ENCODE measurements at regions of chr6 and their contacts with region 1.

Region 1: GRCh38 chr6:125749173-125749864 is at the start of gene HEY2:
- DNase-seq: peak; percentile 92 to 94
- ATAC-seq: peak; percentile 55 to 65
- H3K4me3 ChIP-seq: peak within 1 kb of the TSS; percentile 73 to 86 (median 85)
- H3K27ac ChIP-seq: peak within 1 kb of the TSS; percentile 89 to 99 (median 94)
- H3K4me1 ChIP-seq: peaks cover 11 to 30% of the 10 kb centered on the region in 2 donors
- H3K27me3 ChIP-seq: no peaks in the 10 kb centered on the region
- CTCF ChIP-seq: peak in 3 of 5 experiments; percentile 43 to 51 (median 48)
- POLR2A ChIP-seq: peak; percentile 92 to 97
- total RNA-seq, gene HEY2: 5.9 to 9.0 (median 7.4) TPM

Region 2: GRCh38 chr6:124303971-124304370 is 1445.3 kb before region 1 on chr6:
- in situ Hi-C with region 1: no loop called
- intact Hi-C with region 1: no loop called
- DNase-seq: no peak
- ATAC-seq: no peak
- H3K4me3 ChIP-seq: no peak overlapping the region
- H3K27ac ChIP-seq: no peak overlapping the region
- H3K4me1 ChIP-seq: no peaks in the 10 kb centered on the region
- H3K27me3 ChIP-seq: no peaks in the 10 kb centered on the region
- CTCF ChIP-seq: no peak
- POLR2A ChIP-seq: no peak

Region 3: DNA sequence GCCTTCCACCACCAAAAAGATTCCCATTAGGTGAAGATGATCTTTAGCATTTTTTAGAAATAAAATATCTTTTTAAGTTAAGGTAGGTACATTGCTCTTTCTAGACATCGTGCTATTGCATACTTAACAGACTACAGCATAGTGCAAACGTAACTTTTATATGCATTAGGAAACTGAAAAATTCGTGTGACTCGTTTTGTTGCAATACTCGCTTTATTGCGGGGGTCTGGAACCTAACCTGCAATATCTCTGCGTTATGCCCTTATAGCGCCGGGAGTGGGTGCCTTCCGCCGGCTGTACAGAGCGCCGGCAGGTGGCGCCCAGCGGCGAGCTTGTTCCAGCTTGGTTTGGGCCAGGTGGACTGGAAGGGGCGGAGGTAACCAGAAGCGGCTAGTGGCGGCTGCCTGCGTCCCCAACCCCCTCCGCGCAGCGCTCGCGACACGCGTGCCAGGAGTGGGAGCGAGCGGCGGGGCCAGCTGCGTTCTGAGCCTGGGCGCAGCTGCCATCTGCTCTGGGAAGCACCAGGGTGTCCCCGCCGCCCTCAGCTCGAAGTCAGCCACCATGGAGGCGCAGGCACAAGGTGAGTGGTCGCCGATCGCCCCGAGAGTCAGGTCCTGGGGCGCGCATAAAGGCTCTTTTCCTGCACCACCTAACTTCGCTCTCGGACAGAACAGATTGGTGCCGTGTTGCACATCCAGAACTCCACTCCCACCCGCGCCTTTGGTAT is 595.8 kb before region 1 on chr6 and contains the start of gene TPD52L1:
- in situ Hi-C with region 1: loop called in 3 of 4 experiments (anchors 25 kb)
- intact Hi-C with region 1: loop called (anchors 2 kb)
- DNase-seq: peak; percentile 88 to 93
- ATAC-seq: peak; percentile 71 to 73
- H3K4me3 ChIP-seq: peak within 1 kb of the TSS; percentile 65 to 93 (median 86)
- H3K27ac ChIP-seq: peak within 1 kb of the TSS; percentile 89 to 94 (median 94)
- H3K4me1 ChIP-seq: peaks cover 37 to 45% of the 10 kb centered on the region in 2 donors
- H3K27me3 ChIP-seq: no peaks in the 10 kb centered on the region
- CTCF ChIP-seq: peak; percentile 89 to 95 (median 92)
- POLR2A ChIP-seq: peak; percentile 71 to 77
- total RNA-seq, gene TPD52L1: 47.6 to 152 (median 123) TPM

Region 4: GRCh38 chr6:125307964-125308615 is 441.2 kb before region 1 on chr6:
- in situ Hi-C with region 1: no loop called
- intact Hi-C with region 1: loop called (anchors 2 kb)
- DNase-seq: peak; percentile 58 to 78
- ATAC-seq: peak; percentile 87 to 92
- H3K4me3 ChIP-seq: no peak overlapping the region
- H3K27ac ChIP-seq: peak overlapping the region; percentile 69 to 87 (median 75)
- H3K4me1 ChIP-seq: peaks cover 6 to 12% of the 10 kb centered on the region in 2 donors
- H3K27me3 ChIP-seq: no peaks in the 10 kb centered on the region
- CTCF ChIP-seq: no peak
- POLR2A ChIP-seq: no peak

Region 5: GRCh38 chr6:125516644-125517043 is 232.7 kb before region 1 on chr6:
- in situ Hi-C with region 1: no loop called
- intact Hi-C with region 1: no loop called
- DNase-seq: no peak
- ATAC-seq: no peak
- H3K4me3 ChIP-seq: no peak overlapping the region
- H3K27ac ChIP-seq: no peak overlapping the region
- H3K4me1 ChIP-seq: no peaks in the 10 kb centered on the region
- H3K27me3 ChIP-seq: no peaks in the 10 kb centered on the region
- CTCF ChIP-seq: no peak
- POLR2A ChIP-seq: no peak

Region 6: DNA sequence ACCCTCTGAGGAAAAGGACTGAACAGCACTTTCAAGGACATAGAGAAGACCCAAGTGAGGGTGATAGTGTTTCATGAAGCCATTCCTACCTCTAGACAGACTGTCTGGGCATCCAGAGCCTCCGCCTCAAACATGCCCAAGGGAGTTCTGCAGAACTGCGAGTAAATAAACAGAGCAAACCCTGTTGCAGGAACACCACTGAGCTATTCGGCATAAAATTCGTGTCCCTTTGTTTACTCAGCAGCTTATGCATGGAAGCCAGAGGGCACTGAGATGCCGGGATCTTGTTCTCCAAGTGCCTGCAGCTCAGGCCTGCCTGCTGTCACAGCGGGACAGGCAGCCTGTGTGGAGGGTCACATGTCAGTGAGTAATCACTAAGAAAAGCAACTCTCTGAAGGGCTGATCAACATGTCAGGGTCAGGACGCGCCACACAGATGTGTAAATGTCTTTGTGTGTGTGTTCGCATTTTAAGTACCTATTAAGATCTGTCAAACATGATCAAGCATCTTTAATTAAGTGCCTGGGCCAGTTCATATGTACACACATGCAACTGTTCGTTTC is 164.8 kb before region 1 on chr6:
- in situ Hi-C with region 1: loop called in 2 of 4 experiments (anchors 10 to 25 kb)
- intact Hi-C with region 1: loop called (anchors 2 kb)
- DNase-seq: peak; percentile 83 to 88
- ATAC-seq: peak; percentile 97 to 98
- H3K4me3 ChIP-seq: peak overlapping the region in 2 of 4 donors; percentile 12 to 25
- H3K27ac ChIP-seq: peak overlapping the region; percentile 84 to 88 (median 87)
- H3K4me1 ChIP-seq: peaks cover 14 to 17% of the 10 kb centered on the region in 2 donors
- H3K27me3 ChIP-seq: no peaks in the 10 kb centered on the region
- CTCF ChIP-seq: peak; percentile 34 to 62 (median 44)
- POLR2A ChIP-seq: peak in 1 of 2 donors; percentile 34

Region 7: DNA sequence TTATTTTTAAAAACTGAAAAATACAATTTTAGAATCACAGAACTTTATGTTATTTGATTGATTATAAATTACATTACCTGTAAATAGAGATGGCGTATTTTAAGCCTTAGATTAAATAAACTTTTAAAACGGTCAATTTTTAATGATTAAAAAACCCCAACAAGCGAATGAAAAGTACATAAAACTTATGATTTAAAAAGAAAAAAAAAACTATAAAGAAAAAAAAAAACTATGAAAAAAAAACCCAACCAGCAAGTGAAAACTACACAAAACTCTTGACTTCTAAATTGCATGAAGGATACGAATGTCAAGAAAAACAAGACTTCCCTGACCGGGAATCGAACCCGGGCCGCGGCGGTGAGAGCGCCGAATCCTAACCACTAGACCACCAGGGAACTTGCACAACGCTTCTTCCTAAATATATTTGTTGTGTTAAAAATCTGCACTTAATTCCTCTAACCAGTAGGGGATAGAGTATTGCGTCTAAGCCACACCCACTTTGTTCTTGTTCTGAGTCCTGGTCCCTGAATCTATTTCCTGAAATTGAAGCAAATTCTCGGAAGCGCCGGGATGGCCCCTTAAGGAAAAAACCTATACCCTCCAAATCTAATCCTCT is 30.7 kb after region 1 on chr6:
- in situ Hi-C with region 1: no loop called
- intact Hi-C with region 1: loop called (anchors 2 kb)
- DNase-seq: peak; percentile 67 to 74
- ATAC-seq: peak; percentile 92 to 94
- H3K4me3 ChIP-seq: peak overlapping the region; percentile 65 to 80 (median 75)
- H3K27ac ChIP-seq: peak overlapping the region; percentile 91 to 97 (median 95)
- H3K4me1 ChIP-seq: peaks cover 0 to 5% of the 10 kb centered on the region in 2 donors
- H3K27me3 ChIP-seq: no peaks in the 10 kb centered on the region
- CTCF ChIP-seq: peak; percentile 17 to 52 (median 44)
- POLR2A ChIP-seq: no peak

Region 8: GRCh38 chr6:126504792-126505191 is 755.5 kb after region 1 on chr6:
- in situ Hi-C with region 1: no loop called
- intact Hi-C with region 1: no loop called
- DNase-seq: no peak
- ATAC-seq: no peak
- H3K4me3 ChIP-seq: no peak overlapping the region
- H3K27ac ChIP-seq: no peak overlapping the region
- H3K4me1 ChIP-seq: no peaks in the 10 kb centered on the region
- H3K27me3 ChIP-seq: no peaks in the 10 kb centered on the region
- CTCF ChIP-seq: no peak
- POLR2A ChIP-seq: no peak

Measured in gastrocnemius medialis (tissue), 4 donors.